ENCODE measurements at regions of chr7 and their contacts with region 1.

Region 1: GRCh38 chr7:80984619-80985018 is 65.8 kb upstream of the SEMA3C start:
- DNase-seq: no peak
- ATAC-seq: no peak
- H3K4me3 ChIP-seq: no peak overlapping the region
- H3K27ac ChIP-seq: no peak overlapping the region
- H3K4me1 ChIP-seq: no peaks in the 10 kb centered on the region
- H3K27me3 ChIP-seq: no peaks in the 10 kb centered on the region
- CTCF ChIP-seq: no peak

Region 2: GRCh38 chr7:81040496-81040895 is 55.9 kb after region 1 on chr7:
- intact Hi-C with region 1: loop called in 2 of 10 experiments (anchors 2 to 10 kb)
- DNase-seq: no peak
- ATAC-seq: no peak
- H3K4me3 ChIP-seq: no peak overlapping the region
- H3K27ac ChIP-seq: no peak overlapping the region
- H3K4me1 ChIP-seq: no peaks in the 10 kb centered on the region
- H3K27me3 ChIP-seq: no peaks in the 10 kb centered on the region
- CTCF ChIP-seq: no peak